CD14-positive monocyte (primary cell): ENCODE measurements at regions of chr18 and their contacts with region 1.

Region 1: GRCh38 chr18:12744103-12744502 is 41.3 kb downstream of the PSMG2 start:
- DNase-seq: peak; percentile 23 to 57 (median 47)
- H3K4me3 ChIP-seq: no peak overlapping the region
- H3K4me3 Mint-ChIP-seq: no peak overlapping the region
- H3K27ac ChIP-seq: no peak overlapping the region
- H3K27ac Mint-ChIP-seq: no peak overlapping the region
- H3K4me1 ChIP-seq: no peaks in the 10 kb centered on the region
- H3K4me1 Mint-ChIP-seq: no peaks in the 10 kb centered on the region
- H3K27me3 ChIP-seq: no peaks in the 10 kb centered on the region
- H3K27me3 Mint-ChIP-seq: peaks cover 0 to 1% (median under 1%) of the 10 kb centered on the region in 3 donors
- CTCF ChIP-seq: peak; percentile 66

Region 2: DNA sequence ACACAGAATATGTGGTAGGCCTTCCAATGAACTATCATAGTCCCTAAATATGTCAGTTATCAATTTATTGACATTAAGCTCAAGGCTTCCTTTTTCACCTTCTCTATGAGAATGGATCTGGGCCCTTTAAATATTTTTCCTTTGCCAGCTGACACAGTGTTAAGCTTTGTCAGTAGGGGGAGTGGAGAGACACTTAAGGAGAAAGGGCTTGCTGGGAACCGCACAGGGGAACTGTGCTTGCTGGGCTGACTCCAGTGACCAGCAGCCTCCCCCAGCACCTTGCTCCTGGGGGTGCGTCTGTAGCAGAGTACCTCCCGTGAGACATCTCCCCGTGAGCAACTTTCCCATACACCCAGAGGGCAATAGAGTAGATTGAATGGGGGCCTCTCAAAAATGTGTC is 146.4 kb after region 1 on chr18:
- intact Hi-C with region 1: loop called (anchors 5 kb)
- DNase-seq: no peak
- H3K4me3 ChIP-seq: no peak overlapping the region
- H3K4me3 Mint-ChIP-seq: no peak overlapping the region
- H3K27ac ChIP-seq: no peak overlapping the region
- H3K27ac Mint-ChIP-seq: no peak overlapping the region
- H3K4me1 ChIP-seq: peaks cover 5 to 8% of the 10 kb centered on the region in 2 donors
- H3K4me1 Mint-ChIP-seq: peaks cover 23% of the 10 kb centered on the region
- H3K27me3 ChIP-seq: no peaks in the 10 kb centered on the region
- H3K27me3 Mint-ChIP-seq: peaks cover 0 to 8% (median 2%) of the 10 kb centered on the region in 3 donors
- CTCF ChIP-seq: peak; percentile 18